A549 (cell line): ENCODE measurements at regions of chr22 and their contacts with region 1.

Region 1: DNA sequence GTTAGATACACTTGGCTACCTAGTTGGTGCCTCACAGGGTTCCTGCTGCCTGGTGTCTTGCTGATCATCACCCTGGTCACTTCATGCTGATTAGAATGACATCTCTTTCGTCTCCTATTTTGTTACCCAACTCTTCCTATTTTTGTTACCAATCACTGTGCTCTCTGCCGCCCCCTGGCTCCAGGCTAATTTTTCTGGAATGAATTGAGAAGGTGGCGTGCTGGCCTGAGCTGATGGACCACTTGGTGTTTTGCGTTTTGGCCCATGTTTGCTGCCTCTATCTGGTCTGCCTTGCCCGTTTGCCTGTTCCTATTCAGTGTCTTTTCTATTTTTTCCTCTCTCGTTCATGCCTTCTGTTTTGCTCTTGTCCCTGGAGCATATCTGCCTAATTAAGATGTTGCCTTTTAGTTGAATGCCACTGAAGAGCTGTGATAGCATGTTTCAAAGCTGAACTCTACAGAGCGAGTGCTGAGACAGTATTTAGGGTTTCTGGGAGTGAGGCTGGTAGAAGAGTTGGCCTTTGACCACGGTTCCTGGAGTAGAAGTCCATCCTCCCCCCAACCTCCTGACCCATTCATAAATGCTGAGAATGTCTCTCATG is 5.9 kb upstream of the ATF4 start:
- DNase-seq: peak in 1 of 2 experiments; percentile 31
- ATAC-seq: peak; percentile 37 to 61; a peak in 4 of 6 replicates
- H3K4me3 ChIP-seq: no peak overlapping the region
- H3K27ac ChIP-seq: no peak overlapping the region
- H3K4me1 ChIP-seq: peaks cover 10% of the 10 kb centered on the region
- CTCF ChIP-seq: peak; percentile 62
- EP300 ChIP-seq: no peak
- POLR2A ChIP-seq: no peak
- RAD21 ChIP-seq: 0 out of 5 replicates have a peak, but pooled peaks have one; percentile 13 to 14

Region 2: DNA sequence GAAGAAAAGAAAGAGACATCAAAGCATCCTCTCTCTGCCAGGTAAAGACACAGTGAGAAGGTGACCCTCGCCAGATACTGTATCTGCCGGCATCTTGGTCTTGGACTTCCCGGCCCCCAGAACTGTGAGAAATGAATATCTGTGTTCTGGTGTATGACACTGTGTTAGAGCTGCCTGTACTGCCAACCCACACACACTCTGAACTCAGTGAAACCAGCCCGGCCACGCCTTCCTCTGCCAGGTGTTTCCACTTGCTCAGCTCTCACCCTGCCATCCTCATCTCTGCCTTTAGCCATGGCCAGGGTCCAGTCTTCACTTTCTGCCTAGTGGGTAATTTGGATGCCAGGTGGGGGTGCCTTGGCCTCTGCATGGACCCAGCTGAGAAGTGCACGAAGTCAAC is 386.0 kb before region 1 on chr22:
- CTCF ChIA-PET with region 1: no interaction called
- POLR2A ChIA-PET with region 1: no interaction called
- DNase-seq: no peak
- ATAC-seq: no peak
- H3K4me3 ChIP-seq: no peak overlapping the region
- H3K27ac ChIP-seq: no peak overlapping the region
- H3K4me1 ChIP-seq: 0 out of 3 replicates have a peak, but pooled peaks cover 9% of the 10 kb centered on the region
- CTCF ChIP-seq: no peak
- EP300 ChIP-seq: no peak
- POLR2A ChIP-seq: no peak
- RAD21 ChIP-seq: no peak

Region 3: GRCh38 chr22:39300186-39300830 is 214.2 kb before region 1 on chr22:
- CTCF ChIA-PET with region 1: no interaction called
- POLR2A ChIA-PET with region 1: no interaction called
- DNase-seq: no peak
- ATAC-seq: peak; percentile 46 to 64
- H3K4me3 ChIP-seq: no peak overlapping the region
- H3K27ac ChIP-seq: peak overlapping the region; percentile 78 to 86
- H3K4me1 ChIP-seq: peaks cover 49% of the 10 kb centered on the region
- CTCF ChIP-seq: no peak
- EP300 ChIP-seq: no peak
- POLR2A ChIP-seq: no peak
- RAD21 ChIP-seq: no peak

Region 4: GRCh38 chr22:39490135-39490798 is 24.2 kb before region 1 on chr22:
- CTCF ChIA-PET with region 1: interaction called, 16 read pairs
- POLR2A ChIA-PET with region 1: interaction called, 7 read pairs
- DNase-seq: peak; percentile 74 to 87
- ATAC-seq: peak; percentile 88 to 96
- H3K4me3 ChIP-seq: no peak overlapping the region
- H3K27ac ChIP-seq: no peak overlapping the region
- H3K4me1 ChIP-seq: no peaks in the 10 kb centered on the region
- CTCF ChIP-seq: no peak
- EP300 ChIP-seq: no peak
- POLR2A ChIP-seq: no peak
- RAD21 ChIP-seq: no peak

Region 5: GRCh38 chr22:39496131-39496838 is 18.2 kb before region 1 on chr22:
- CTCF ChIA-PET with region 1: interaction called, 26 read pairs
- POLR2A ChIA-PET with region 1: interaction called, 7 read pairs
- DNase-seq: peak; percentile 48 to 69
- ATAC-seq: peak; percentile 90 to 93
- H3K4me3 ChIP-seq: no peak overlapping the region
- H3K27ac ChIP-seq: no peak overlapping the region
- H3K4me1 ChIP-seq: peaks cover under 1% of the 10 kb centered on the region; the same call in 1 of the 3 replicates
- CTCF ChIP-seq: peak; percentile 53
- EP300 ChIP-seq: no peak
- POLR2A ChIP-seq: no peak
- RAD21 ChIP-seq: peak in 1 of 2 experiments; percentile 12; a peak in 1 of 5 replicates

Region 6: GRCh38 chr22:39502109-39502788 is 12.2 kb before region 1 on chr22 and contains the start of gene MIEF1:
- CTCF ChIA-PET with region 1: interaction called, 26 read pairs
- POLR2A ChIA-PET with region 1: interaction called, 27 read pairs
- DNase-seq: peak; percentile 88 to 95
- ATAC-seq: peak; percentile 99
- H3K4me3 ChIP-seq: peak within 1 kb of the TSS; percentile 100
- H3K27ac ChIP-seq: peak within 1 kb of the TSS; percentile 98
- H3K4me1 ChIP-seq: peaks cover 12% of the 10 kb centered on the region; the same call in 2 of the 3 replicates
- CTCF ChIP-seq: no peak
- EP300 ChIP-seq: no peak
- POLR2A ChIP-seq: peak; percentile 65
- RAD21 ChIP-seq: no peak
- polyA plus RNA-seq, gene MIEF1: 19.8 and 20.5 TPM in 2 replicates